Posterior vena cava (tissue), 2 donors: ENCODE measurements at regions of chr5 and their contacts with region 1.

Region 1: GRCh38 chr5:135977375-135977928 is 22.7 kb upstream of the LECT2 start:
- DNase-seq: peak; percentile 94

Region 2: DNA sequence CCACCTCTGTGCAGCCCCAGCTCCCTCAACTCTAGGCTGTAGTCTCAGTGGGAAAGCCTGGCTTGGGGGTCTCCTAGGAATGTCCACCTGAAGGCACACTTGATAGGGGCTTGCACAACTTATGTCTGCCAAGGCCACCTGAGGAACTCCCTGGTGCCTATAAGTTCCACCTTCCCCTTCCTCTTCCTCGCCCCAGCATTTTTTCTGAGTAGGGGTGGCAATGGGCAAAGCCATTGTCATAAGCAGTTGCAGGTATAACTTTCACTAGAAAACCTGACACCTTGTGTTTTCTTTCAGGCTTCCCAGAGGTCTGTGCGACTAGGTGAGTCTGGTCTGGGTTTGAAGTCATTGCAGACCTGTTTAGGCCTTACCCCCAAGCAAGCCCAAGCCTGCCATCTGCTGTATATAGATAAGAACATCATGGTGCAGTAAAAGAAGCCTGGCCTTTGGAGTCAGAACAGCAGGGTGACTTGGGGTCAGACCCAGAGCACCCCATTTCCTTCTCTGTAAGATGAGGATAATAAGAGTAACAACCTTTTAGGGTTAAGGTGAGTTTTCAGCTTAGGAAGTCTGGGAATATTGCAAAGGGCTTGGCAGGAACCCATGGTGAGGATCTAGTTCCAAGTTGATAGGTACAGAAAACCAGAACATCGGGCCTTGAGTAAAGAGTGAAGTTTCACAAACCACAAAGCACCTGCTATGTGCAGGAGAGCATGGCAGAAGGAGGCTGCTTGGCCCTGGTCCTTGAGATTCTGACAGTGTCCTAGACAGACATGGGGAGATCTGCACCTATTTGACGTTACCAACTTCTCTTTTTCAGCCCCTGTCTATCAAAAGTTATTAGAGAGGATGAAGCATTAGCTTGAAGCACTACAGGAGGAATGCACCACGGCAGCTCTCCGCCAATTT is 85.2 kb after region 1 on chr5:
- intact Hi-C with region 1: loop called in 1 of 2 experiments (anchors 10 kb)
- DNase-seq: no peak